ENCODE measurements at regions of chr11 and their contacts with region 1.

Region 1: DNA sequence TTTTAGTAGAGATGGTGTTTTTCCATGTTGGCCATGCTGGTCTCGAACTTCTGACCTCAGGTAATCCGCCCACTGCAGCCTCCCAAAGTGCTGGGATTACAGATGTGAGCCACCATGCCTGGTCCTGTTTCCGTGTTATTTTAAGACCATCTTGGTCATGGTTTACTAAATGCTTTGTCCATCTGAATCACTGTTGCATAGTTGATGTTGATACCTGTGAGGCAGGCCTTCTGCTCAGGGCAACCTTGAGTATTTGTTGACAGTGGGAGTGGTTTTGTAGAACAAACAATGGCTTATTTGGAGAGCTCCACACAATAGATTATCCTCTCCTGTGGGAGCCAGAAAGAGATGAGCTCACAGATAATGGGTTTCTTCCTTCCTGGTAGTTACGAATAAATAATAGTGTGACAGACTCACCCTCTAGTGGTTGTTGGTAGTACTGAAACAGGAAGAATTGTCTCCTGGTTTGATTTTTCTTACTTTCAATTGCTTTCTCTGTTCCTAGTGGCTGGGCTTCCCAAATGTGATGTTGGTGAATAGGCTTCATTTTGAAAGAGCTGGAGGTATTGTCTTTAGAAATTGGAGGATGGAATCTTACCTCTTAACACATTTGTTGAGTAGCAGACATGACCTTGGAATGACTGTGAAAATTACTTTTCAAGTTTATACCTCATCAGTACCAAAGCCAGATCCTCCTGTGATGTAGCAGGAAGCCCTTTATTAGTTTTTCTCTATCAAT is 39.0 kb downstream of the CTNND1 start:
- DNase-seq: no peak
- ATAC-seq: peak; percentile 93
- H3K4me3 Mint-ChIP-seq: no peak overlapping the region
- H3K27ac Mint-ChIP-seq: peak overlapping the region; percentile 97
- H3K4me1 Mint-ChIP-seq: peaks cover 18% of the 10 kb centered on the region
- H3K27me3 Mint-ChIP-seq: no peaks in the 10 kb centered on the region
- CTCF ChIP-seq: peak; percentile 51

Region 2: DNA sequence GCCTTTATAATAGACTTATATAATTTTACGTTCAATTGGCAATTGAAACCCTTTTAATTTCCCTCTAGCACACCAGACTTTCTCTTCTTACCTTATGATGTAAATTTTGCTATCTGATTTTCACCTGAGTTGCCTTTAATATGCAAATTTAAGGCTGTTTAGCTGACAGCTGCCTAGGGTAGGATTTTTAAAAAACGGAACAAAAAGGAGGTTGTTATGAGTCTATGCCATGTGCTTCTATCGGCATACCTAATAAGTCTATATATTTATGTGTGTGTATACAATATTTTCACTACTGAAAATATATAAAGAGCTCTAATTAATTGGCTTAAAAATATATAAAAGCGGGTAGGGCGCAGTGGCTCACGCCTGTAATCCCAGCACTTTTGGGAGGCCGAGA is 71.1 kb before region 1 on chr11:
- CTCF ChIA-PET with region 1: interaction called, 15 read pairs
- POLR2A ChIA-PET with region 1: no interaction called
- DNase-seq: no peak
- ATAC-seq: no peak
- H3K4me3 Mint-ChIP-seq: peak overlapping the region; percentile 30
- H3K27ac Mint-ChIP-seq: peak overlapping the region; percentile 95; the same call in 1 of the 2 replicates
- H3K4me1 Mint-ChIP-seq: peaks cover 39% of the 10 kb centered on the region
- H3K27me3 Mint-ChIP-seq: no peaks in the 10 kb centered on the region
- CTCF ChIP-seq: no peak

Region 3: GRCh38 chr11:57751676-57752253 is 48.8 kb before region 1 on chr11 and contains the start of gene BTBD18:
- CTCF ChIA-PET with region 1: interaction called, 186 read pairs
- POLR2A ChIA-PET with region 1: interaction called, 13 read pairs
- DNase-seq: peak; percentile 32
- ATAC-seq: peak; percentile 86
- H3K4me3 Mint-ChIP-seq: no peak within 1 kb of the TSS
- H3K27ac Mint-ChIP-seq: peak within 1 kb of the TSS; percentile 75
- H3K4me1 Mint-ChIP-seq: peaks cover 21% of the 10 kb centered on the region
- H3K27me3 Mint-ChIP-seq: no peaks in the 10 kb centered on the region
- CTCF ChIP-seq: peak; percentile 24; the same call in 1 of the 2 replicates
- total RNA-seq, gene BTBD18: 0.09 to 0.14 TPM in 2 of 3 replicates, not detected in the other

Region 4: GRCh38 chr11:57772562-57772961 is 28.1 kb before region 1 on chr11:
- CTCF ChIA-PET with region 1: interaction called, 110 read pairs
- POLR2A ChIA-PET with region 1: interaction called, 3 read pairs
- DNase-seq: no peak
- ATAC-seq: no peak
- H3K4me3 Mint-ChIP-seq: no peak overlapping the region
- H3K27ac Mint-ChIP-seq: peak overlapping the region; percentile 51; the same call in 1 of the 2 replicates
- H3K4me1 Mint-ChIP-seq: peaks cover 61% of the 10 kb centered on the region
- H3K27me3 Mint-ChIP-seq: no peaks in the 10 kb centered on the region
- CTCF ChIP-seq: no peak

Region 5: DNA sequence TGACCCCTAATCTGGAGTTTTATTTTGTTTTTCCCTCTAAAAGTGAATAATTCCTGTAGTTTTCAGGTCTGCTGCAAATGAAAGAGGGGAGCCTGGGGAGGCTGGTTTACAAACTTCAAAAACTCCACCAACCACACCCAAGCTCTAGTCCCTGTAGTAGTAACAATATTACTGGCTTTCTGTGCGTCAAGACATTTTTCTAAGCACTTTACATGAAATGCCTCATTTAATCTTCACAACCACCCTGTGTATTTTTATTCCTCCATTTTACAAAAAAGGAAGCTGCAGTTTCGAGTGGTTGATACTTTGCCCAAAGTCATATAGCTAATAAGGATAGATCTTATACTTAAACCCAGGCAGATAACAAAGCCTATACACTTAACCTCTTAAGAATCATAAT is 15.5 kb before region 1 on chr11:
- CTCF ChIA-PET with region 1: interaction called, 61 read pairs
- POLR2A ChIA-PET with region 1: interaction called, 21 read pairs
- DNase-seq: no peak
- ATAC-seq: no peak
- H3K4me3 Mint-ChIP-seq: no peak overlapping the region
- H3K27ac Mint-ChIP-seq: no peak overlapping the region; the same call in 1 of the 2 replicates
- H3K4me1 Mint-ChIP-seq: peaks cover 71% of the 10 kb centered on the region
- H3K27me3 Mint-ChIP-seq: no peaks in the 10 kb centered on the region
- CTCF ChIP-seq: no peak